ENCODE measurements at regions of chr14 and their contacts with region 1.

Region 1: DNA sequence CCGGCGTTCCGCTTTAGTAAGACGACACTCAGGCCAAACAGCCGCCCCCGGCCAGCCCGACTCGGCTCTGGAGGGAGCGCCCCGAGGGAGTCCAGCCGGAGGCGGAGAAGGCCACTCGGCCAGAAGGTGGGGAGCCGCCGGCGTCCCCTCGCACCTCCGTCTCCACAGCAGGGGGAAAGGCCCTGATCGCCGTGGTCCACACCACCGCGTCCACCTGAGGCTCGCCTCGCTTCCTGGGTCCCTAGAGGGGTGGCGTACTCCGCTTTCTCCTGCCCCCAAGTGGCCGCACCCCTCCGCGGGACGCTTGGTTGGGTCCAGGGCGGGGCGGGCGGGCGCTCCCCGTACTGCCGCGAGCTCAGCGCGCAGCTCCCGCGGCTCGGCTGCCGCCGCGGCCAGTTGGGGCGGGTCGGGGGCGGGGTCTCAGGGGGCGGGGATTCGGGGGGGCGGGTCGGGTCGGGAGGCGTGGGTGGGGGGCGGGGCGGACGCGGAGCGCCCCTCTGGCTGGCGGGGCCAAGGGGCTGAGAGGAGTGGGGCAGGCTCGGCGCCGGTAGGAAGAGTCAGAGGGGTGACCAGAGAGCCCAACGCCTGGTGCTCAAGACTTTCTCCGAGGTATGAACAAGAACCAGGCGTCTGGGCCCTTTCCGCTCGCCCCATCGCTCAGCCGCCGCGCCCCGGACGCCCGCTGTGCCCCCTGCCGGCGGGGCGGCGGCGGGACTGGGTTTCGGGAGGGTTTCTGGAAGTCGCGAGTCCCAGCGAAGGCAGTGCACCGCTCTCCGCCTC is at the start of gene FRMD6:
- DNase-seq: peak; percentile 89 to 92
- ATAC-seq: peak; percentile 91 to 98 (median 92)
- H3K4me3 ChIP-seq: peak within 1 kb of the TSS; percentile 73 to 98 (median 89)
- H3K27ac ChIP-seq: peak within 1 kb of the TSS; percentile 90 to 99 (median 97)
- H3K4me1 ChIP-seq: peaks cover 0 to 44% (median 11%) of the 10 kb centered on the region in 9 donors
- H3K27me3 ChIP-seq: peaks cover 0 to 29% (median 0%) of the 10 kb centered on the region in 7 donors
- CTCF ChIP-seq: peak; percentile 61 to 88 (median 79)
- total RNA-seq, gene FRMD6: 5.9 to 14.2 (median 6.9) TPM

Region 2: DNA sequence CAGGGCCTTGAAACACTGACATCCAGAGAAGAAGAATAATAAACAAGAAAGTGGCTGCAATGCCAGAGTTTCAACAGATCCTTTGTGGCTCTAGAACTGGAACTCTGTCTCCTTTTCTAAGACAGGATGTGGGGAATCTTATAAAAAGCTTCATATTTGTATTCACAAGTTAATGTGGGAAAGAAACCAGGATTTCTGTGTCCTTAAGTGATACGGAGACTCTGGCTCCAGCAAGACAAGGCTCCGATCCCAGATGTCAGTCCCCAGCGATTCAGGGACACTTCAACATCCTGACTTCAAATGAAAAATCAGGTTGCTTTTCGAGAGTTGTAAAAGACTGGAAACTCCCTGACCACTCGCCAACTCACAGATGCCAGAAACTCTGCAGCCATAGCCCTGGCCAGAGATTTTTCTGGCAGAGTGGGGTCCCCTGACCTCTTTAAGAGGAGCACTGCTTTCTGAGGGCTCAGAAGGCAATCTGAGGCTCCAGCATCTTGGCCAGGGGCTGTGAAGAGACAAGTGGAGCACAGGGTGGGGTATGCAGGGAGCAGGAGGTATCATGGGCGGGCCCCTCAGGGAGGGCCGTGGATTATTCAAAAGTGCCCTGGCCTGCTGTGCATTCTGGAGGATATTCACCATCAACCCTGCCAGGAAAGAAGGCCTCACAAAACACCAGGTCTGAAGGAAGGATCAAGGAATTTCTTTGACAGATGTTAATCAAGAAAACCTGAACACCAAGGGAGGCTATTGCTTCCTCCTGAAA is 358.2 kb before region 1 on chr14:
- intact Hi-C with region 1: loop called in 4 of 10 experiments (anchors 5 to 10 kb)
- DNase-seq: peak; percentile 34 to 68
- ATAC-seq: peak; percentile 61 to 85 (median 82)
- H3K4me3 ChIP-seq: no peak overlapping the region
- H3K27ac ChIP-seq: peak overlapping the region in 8 of 10 donors; percentile 11 to 74 (median 56)
- H3K4me1 ChIP-seq: peaks cover 3 to 32% (median 18%) of the 10 kb centered on the region in 9 donors
- H3K27me3 ChIP-seq: no peaks in the 10 kb centered on the region
- CTCF ChIP-seq: no peak

Region 3: GRCh38 chr14:51424561-51425251 is 226.9 kb before region 1 on chr14:
- intact Hi-C with region 1: loop called in 1 of 10 experiments (anchors 10 kb)
- DNase-seq: peak in 1 of 2 donors; percentile 69
- ATAC-seq: peak in 7 of 8 donors; percentile 85 to 93 (median 90)
- H3K4me3 ChIP-seq: no peak overlapping the region
- H3K27ac ChIP-seq: peak overlapping the region; percentile 40 to 82 (median 68)
- H3K4me1 ChIP-seq: peaks cover 0 to 23% (median 11%) of the 10 kb centered on the region in 9 donors
- H3K27me3 ChIP-seq: no peaks in the 10 kb centered on the region
- CTCF ChIP-seq: no peak

Region 4: DNA sequence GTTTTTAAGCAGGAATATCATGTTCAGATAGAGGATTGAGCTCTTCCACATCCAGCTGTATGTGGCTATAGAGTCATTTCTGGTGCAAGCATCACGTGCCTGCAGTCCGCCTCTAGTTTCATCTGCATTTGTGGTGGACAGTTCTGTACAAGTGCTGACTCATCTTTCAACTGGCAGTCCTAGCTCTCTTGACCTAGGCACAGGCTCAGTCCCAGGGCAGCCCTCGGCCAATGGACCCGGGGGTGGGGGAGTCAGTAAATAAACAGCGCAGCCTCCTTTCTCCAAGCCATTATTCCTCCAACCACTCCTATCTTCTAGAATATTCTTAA is 41.7 kb before region 1 on chr14:
- intact Hi-C with region 1: no loop called
- DNase-seq: no peak
- ATAC-seq: no peak
- H3K4me3 ChIP-seq: no peak overlapping the region
- H3K27ac ChIP-seq: no peak overlapping the region
- H3K4me1 ChIP-seq: no peaks in the 10 kb centered on the region
- H3K27me3 ChIP-seq: no peaks in the 10 kb centered on the region
- CTCF ChIP-seq: no peak

Region 5: GRCh38 chr14:51677266-51677665 is 25.7 kb after region 1 on chr14:
- intact Hi-C with region 1: no loop called
- DNase-seq: no peak
- ATAC-seq: peak in 2 of 8 donors; percentile 44 to 57
- H3K4me3 ChIP-seq: no peak overlapping the region
- H3K27ac ChIP-seq: peak overlapping the region in 4 of 10 donors; percentile 27 to 44 (median 36)
- H3K4me1 ChIP-seq: peaks cover 0 to 50% (median 20%) of the 10 kb centered on the region in 9 donors
- H3K27me3 ChIP-seq: no peaks in the 10 kb centered on the region
- CTCF ChIP-seq: no peak

Region 6: DNA sequence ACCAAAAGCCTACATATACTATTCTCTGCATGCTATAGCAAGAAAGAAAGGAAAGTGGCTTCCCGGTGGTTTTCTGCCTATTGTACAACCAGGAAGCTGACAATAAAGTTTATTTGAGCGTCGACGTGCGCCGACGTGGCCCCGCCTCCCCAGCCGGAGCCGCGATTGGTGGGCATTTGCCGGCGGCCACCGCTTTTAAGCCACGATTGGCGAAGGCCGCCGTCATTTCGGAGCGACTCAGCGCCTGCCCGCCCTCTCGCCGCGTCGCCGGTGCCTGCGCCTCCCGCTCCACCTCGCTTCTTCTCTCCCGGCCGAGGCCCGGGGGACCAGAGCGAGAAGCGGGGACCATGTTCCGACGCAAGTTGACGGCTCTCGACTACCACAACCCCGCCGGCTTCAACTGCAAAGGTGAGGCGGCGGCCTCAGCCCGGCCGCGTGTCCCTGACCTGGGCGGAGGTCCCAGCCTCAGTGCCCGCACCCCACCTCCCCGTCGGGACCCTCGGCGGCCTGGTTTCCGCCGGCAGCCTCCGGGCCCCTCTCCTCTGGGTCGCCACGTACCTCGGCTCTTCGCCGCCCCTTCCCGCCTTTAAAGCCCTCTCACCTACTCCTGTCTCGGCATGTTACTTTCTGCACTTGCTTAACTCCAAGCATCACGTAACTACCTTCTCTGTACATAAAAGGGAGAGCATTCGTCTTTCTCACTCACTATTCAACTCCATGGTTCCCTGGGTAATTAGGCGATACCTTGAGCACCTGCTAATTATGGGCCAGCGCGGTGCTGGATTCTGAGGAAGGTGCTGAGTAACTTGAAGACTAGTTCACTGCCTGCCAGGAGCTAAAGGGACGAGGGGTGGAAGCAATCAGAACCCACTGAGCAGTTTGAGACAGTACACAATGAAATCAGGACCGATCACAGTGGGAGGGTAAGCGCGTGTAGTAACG is 338.0 kb after region 1 on chr14 and contains the start of gene RTRAF:
- intact Hi-C with region 1: loop called in 1 of 10 experiments (anchors 2 kb)
- DNase-seq: peak; percentile 95
- ATAC-seq: peak; percentile 98 to 100 (median 99)
- H3K4me3 ChIP-seq: peak within 1 kb of the TSS; percentile 80 to 96 (median 93)
- H3K27ac ChIP-seq: peak within 1 kb of the TSS; percentile 82 to 96 (median 91)
- H3K4me1 ChIP-seq: peaks cover 0 to 53% (median 46%) of the 10 kb centered on the region in 9 donors
- H3K27me3 ChIP-seq: no peaks in the 10 kb centered on the region
- CTCF ChIP-seq: no peak
- total RNA-seq, gene RTRAF: 181 to 258 (median 214) TPM

Measured in heart right ventricle (tissue), 16 donors.